ENCODE measurements at regions of chr10 and their contacts with region 1.

Region 1: DNA sequence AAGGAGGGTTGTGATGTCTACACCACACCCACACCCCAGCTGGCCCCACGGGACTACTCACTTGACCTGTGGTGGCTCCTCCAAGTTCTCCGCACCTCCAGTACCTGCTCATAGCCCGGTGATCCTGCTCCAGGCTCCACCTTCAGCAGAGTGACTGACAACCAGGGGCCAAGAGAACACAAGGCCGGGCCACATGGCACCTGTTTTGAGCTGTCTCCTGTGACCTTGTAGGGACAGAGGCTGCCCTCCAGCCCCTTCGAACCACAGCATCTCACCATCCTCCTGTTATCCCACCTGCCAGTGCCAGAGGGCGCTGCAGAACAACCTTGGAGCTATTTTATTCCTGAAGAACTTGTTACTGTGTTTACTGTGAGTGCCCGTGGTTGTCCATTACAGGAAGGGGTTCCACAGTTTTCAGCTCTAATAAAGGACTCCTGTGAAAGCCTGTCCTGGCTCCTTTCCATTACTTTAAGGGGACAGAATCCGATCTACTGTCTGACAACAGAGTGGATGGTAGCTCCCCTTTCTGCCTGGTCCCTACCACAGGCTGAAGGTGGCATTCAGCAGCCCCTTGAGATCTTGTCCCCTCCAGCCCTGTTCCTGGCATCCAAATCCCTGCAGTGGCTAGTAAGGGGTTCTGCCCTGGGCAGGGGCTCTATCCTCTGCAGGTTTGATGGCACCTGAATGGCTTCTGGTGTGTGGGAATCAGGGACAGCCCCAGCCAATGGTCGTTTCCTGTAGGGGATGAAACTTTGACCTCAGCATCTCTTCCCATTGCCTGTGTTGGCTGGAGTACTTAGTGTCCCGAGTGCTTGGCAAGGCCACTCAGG is 50.8 kb downstream of the C10orf120 start:
- DNase-seq: peak; percentile 70
- H3K4me3 ChIP-seq: no peak overlapping the region; a peak in 1 of 4 replicates
- H3K27ac ChIP-seq: no peak overlapping the region
- H3K4me1 ChIP-seq: no peaks in the 10 kb centered on the region
- H3K27me3 ChIP-seq: no peaks in the 10 kb centered on the region
- CTCF ChIP-seq: peak; percentile 67
- EP300 ChIP-seq: no peak
- RAD21 ChIP-seq: peak; percentile 79

Region 2: GRCh38 chr10:122618461-122619165 is 30.2 kb before region 1 on chr10:
- CTCF ChIA-PET with region 1: interaction called, 11 read pairs
- POLR2A ChIA-PET with region 1: no interaction called
- DNase-seq: no peak
- H3K4me3 ChIP-seq: no peak overlapping the region
- H3K27ac ChIP-seq: no peak overlapping the region
- H3K4me1 ChIP-seq: no peaks in the 10 kb centered on the region
- H3K27me3 ChIP-seq: no peaks in the 10 kb centered on the region
- CTCF ChIP-seq: no peak
- EP300 ChIP-seq: no peak
- RAD21 ChIP-seq: no peak

Region 3: DNA sequence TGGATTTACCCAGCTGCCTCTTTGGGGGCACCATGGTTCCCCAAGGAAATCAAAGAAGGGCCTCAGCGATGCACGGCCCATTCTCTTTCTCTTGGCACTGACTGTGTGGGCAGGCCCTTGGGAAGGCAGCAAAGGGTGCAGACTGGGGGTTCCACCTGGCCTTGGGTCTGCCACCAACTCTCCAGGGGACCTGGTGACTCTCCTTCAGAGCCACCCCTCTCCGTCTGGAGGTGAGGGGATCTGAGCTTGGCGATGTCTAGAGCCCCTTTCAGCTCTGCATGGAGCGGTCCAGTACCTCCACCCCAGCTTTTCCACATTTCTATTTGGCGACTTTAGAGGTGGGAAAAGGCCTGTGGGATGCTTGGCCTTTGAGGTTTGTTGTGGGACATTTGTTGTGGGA is 18.3 kb before region 1 on chr10:
- CTCF ChIA-PET with region 1: interaction called, 10 read pairs
- POLR2A ChIA-PET with region 1: no interaction called
- DNase-seq: no peak
- H3K4me3 ChIP-seq: no peak overlapping the region
- H3K27ac ChIP-seq: no peak overlapping the region
- H3K4me1 ChIP-seq: peaks cover 0 to 14% of the 10 kb centered on the region in 2 experiments; a peak in 1 of 4 replicates
- H3K27me3 ChIP-seq: no peaks in the 10 kb centered on the region
- CTCF ChIP-seq: no peak
- EP300 ChIP-seq: no peak
- RAD21 ChIP-seq: no peak

Region 4: GRCh38 chr10:122665329-122665860 is 16.6 kb after region 1 on chr10:
- CTCF ChIA-PET with region 1: interaction called, 21 read pairs
- POLR2A ChIA-PET with region 1: no interaction called
- DNase-seq: no peak
- H3K4me3 ChIP-seq: no peak overlapping the region
- H3K27ac ChIP-seq: no peak overlapping the region
- H3K4me1 ChIP-seq: no peaks in the 10 kb centered on the region
- H3K27me3 ChIP-seq: no peaks in the 10 kb centered on the region; the same call in 1 of the 2 replicates
- CTCF ChIP-seq: no peak
- EP300 ChIP-seq: no peak
- RAD21 ChIP-seq: no peak

Region 5: GRCh38 chr10:122674781-122675180 is 26.0 kb after region 1 on chr10:
- CTCF ChIA-PET with region 1: interaction called, 26 read pairs
- POLR2A ChIA-PET with region 1: no interaction called
- DNase-seq: no peak
- H3K4me3 ChIP-seq: no peak overlapping the region
- H3K27ac ChIP-seq: no peak overlapping the region
- H3K4me1 ChIP-seq: peaks cover 0 to 4% of the 10 kb centered on the region in 2 experiments; a peak in 1 of 4 replicates
- H3K27me3 ChIP-seq: no peaks in the 10 kb centered on the region; the same call in 1 of the 2 replicates
- CTCF ChIP-seq: no peak
- EP300 ChIP-seq: no peak
- RAD21 ChIP-seq: no peak

Region 6: GRCh38 chr10:122692740-122693139 is 43.9 kb after region 1 on chr10:
- CTCF ChIA-PET with region 1: interaction called, 12 read pairs
- POLR2A ChIA-PET with region 1: no interaction called
- DNase-seq: no peak
- H3K4me3 ChIP-seq: no peak overlapping the region
- H3K27ac ChIP-seq: no peak overlapping the region
- H3K4me1 ChIP-seq: no peaks in the 10 kb centered on the region
- H3K27me3 ChIP-seq: no peaks in the 10 kb centered on the region
- CTCF ChIP-seq: no peak
- EP300 ChIP-seq: no peak
- RAD21 ChIP-seq: no peak

Region 7: GRCh38 chr10:122703439-122704118 is 54.8 kb after region 1 on chr10:
- CTCF ChIA-PET with region 1: interaction called, 42 read pairs
- POLR2A ChIA-PET with region 1: no interaction called
- DNase-seq: peak; percentile 79
- H3K4me3 ChIP-seq: peak overlapping the region in 1 of 2 experiments; percentile 45; a peak in 1 of 4 replicates
- H3K27ac ChIP-seq: no peak overlapping the region
- H3K4me1 ChIP-seq: no peaks in the 10 kb centered on the region
- H3K27me3 ChIP-seq: no peaks in the 10 kb centered on the region
- CTCF ChIP-seq: peak; percentile 80
- EP300 ChIP-seq: no peak
- RAD21 ChIP-seq: peak; percentile 92